PC-3 (cell line): ENCODE measurements at regions of chr10 and their contacts with region 1.

Region 1: GRCh38 chr10:121469797-121470606 is 128.2 kb downstream of the FGFR2 start:
- DNase-seq: no peak
- ATAC-seq: no peak
- H3K4me3 ChIP-seq: no peak overlapping the region
- H3K27ac ChIP-seq: no peak overlapping the region
- H3K4me1 ChIP-seq: no peaks in the 10 kb centered on the region
- H3K27me3 ChIP-seq: peaks cover 36% of the 10 kb centered on the region
- CTCF ChIP-seq: no peak

Region 2: DNA sequence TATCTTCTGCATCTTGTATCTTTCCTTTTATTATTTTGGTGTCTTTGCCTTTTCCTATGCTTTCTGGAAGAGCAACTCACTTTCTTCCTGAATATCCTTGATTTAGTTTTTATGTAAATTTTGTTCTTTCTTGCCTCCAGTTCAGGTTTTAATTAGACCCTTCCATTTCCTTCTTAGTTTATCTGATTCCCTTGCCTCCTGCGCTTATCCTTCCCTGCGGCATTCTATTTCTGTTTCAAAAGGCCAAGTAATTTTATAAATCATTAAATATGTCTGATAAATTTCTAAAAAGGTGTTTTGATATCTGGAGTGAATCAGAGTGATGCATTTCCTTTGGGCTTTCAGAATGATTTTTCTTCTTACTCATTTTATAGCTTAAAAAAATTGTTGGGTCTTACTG is 786.5 kb before region 1 on chr10:
- CTCF ChIA-PET with region 1: no interaction called
- POLR2A ChIA-PET with region 1: interaction called, 13 read pairs
- intact Hi-C with region 1: no loop called
- DNase-seq: no peak
- ATAC-seq: no peak
- H3K4me3 ChIP-seq: no peak overlapping the region
- H3K27ac ChIP-seq: no peak overlapping the region
- H3K4me1 ChIP-seq: no peaks in the 10 kb centered on the region
- H3K27me3 ChIP-seq: no peaks in the 10 kb centered on the region
- CTCF ChIP-seq: no peak